HepG2 (cell line): ENCODE measurements at regions of chr16 and their contacts with region 1.

Region 1: DNA sequence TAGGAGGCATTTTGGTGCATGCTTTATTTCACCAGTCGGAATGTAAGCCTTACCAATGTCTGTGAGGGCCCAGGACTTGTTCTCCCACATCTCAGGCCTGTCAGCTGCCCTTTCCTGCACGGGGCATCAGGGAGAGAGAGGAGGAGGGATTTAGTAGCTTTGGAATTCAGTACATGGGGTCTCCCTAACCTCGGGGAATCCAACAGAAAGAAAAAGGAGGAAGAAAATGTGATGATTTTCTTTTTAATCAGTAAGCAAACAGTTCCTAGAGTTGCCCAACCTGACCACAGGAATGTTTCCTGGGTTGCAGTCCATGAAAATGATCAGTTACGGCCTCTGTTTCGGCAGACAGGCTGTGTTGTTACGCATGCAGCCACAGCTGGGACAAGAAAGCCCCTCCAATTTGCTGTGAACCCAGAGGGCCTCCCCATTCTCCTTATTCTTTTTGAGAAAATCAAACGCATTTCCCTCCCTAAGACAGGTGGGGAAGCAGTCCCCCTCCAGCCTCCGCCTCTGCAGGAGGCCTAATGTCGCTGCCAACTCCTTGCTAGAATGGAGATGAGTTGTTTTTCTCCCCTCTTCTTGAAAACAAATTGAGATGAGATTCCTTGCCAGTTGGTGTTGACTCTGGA is 53.1 kb upstream of the TANGO6 start:
- DNase-seq: peak; percentile 96
- ATAC-seq: peak; percentile 70
- H3K4me3 ChIP-seq: peak overlapping the region; percentile 11 to 58 (median 24); a peak in 5 of 6 replicates
- H3K27ac ChIP-seq: peak overlapping the region; percentile 74
- H3K4me1 ChIP-seq: peaks cover 86% of the 10 kb centered on the region
- H3K27me3 ChIP-seq: no peaks in the 10 kb centered on the region
- CTCF ChIP-seq: 0 out of 2 replicates have a peak, but pooled peaks have one; percentile 14
- EP300 ChIP-seq: peak; percentile 80 to 93; a peak in 3 of 4 replicates
- POLR2A ChIP-seq: peak in 1 of 2 experiments; percentile 69; a peak in 2 of 4 replicates
- RAD21 ChIP-seq: peak; percentile 23; the same call in 1 of the 2 replicates

Region 2: DNA sequence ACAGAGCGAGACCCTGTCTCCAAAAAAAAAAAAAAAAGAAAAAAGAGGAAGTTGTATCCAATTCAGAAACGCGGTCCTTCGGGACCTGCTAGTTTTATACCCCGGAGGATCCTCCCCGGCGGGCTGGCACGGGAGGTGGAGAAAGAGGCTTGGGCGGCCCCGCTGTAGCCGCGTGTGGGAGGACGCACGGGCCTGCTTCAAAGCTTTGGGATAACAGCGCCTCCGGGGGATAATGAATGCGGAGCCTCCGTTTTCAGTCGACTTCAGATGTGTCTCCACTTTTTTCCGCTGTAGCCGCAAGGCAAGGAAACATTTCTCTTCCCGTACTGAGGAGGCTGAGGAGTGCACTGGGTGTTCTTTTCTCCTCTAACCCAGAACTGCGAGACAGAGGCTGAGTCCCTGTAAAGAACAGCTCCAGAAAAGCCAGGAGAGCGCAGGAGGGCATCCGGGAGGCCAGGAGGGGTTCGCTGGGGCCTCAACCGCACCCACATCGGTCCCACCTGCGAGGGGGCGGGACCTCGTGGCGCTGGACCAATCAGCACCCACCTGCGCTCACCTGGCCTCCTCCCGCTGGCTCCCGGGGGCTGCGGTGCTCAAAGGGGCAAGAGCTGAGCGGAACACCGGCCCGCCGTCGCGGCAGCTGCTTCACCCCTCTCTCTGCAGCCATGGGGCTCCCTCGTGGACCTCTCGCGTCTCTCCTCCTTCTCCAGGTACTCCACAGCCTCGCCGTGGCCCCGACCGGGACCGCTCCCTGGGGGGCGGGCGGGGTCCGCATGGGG is 145.3 kb before region 1 on chr16 and contains the start of gene CDH3:
- CTCF ChIA-PET with region 1: no interaction called
- POLR2A ChIA-PET with region 1: no interaction called
- in situ Hi-C with region 1: no loop called
- intact Hi-C with region 1: no loop called
- DNase-seq: no peak
- ATAC-seq: peak; percentile 58
- H3K4me3 ChIP-seq: peak within 1 kb of the TSS in 2 of 3 experiments; percentile 5 to 53; a peak in 2 of 6 replicates
- H3K27ac ChIP-seq: no peak within 1 kb of the TSS
- H3K4me1 ChIP-seq: peaks cover 24% of the 10 kb centered on the region
- H3K27me3 ChIP-seq: peaks cover 15 to 65% of the 10 kb centered on the region in 2 experiments
- CTCF ChIP-seq: no peak
- EP300 ChIP-seq: no peak
- POLR2A ChIP-seq: no peak
- RAD21 ChIP-seq: no peak
- total RNA-seq, gene CDH3: not detected in 2 replicates

Region 3: GRCh38 chr16:68744369-68745280 is 45.6 kb before region 1 on chr16:
- CTCF ChIA-PET with region 1: no interaction called
- POLR2A ChIA-PET with region 1: interaction called, 134 read pairs
- in situ Hi-C with region 1: loop called (anchors 5 kb)
- intact Hi-C with region 1: loop called (anchors 2 kb)
- DNase-seq: peak; percentile 97
- ATAC-seq: peak; percentile 90
- H3K4me3 ChIP-seq: peak overlapping the region in 1 of 3 experiments; percentile 30; a peak in 2 of 6 replicates
- H3K27ac ChIP-seq: peak overlapping the region; percentile 83
- H3K4me1 ChIP-seq: peaks cover 87% of the 10 kb centered on the region
- H3K27me3 ChIP-seq: no peaks in the 10 kb centered on the region
- CTCF ChIP-seq: peak; percentile 40
- EP300 ChIP-seq: peak; percentile 80 to 95; a peak in 3 of 4 replicates
- POLR2A ChIP-seq: peak in 1 of 2 experiments; percentile 32; a peak in 1 of 4 replicates
- RAD21 ChIP-seq: peak; percentile 66

Region 4: GRCh38 chr16:69253870-69254341 is 463.7 kb after region 1 on chr16:
- CTCF ChIA-PET with region 1: no interaction called
- POLR2A ChIA-PET with region 1: no interaction called
- in situ Hi-C with region 1: no loop called
- intact Hi-C with region 1: no loop called
- DNase-seq: no peak
- ATAC-seq: no peak
- H3K4me3 ChIP-seq: no peak overlapping the region
- H3K27ac ChIP-seq: no peak overlapping the region
- H3K4me1 ChIP-seq: no peaks in the 10 kb centered on the region
- H3K27me3 ChIP-seq: no peaks in the 10 kb centered on the region
- CTCF ChIP-seq: no peak
- EP300 ChIP-seq: no peak
- POLR2A ChIP-seq: no peak
- RAD21 ChIP-seq: no peak

Region 5: DNA sequence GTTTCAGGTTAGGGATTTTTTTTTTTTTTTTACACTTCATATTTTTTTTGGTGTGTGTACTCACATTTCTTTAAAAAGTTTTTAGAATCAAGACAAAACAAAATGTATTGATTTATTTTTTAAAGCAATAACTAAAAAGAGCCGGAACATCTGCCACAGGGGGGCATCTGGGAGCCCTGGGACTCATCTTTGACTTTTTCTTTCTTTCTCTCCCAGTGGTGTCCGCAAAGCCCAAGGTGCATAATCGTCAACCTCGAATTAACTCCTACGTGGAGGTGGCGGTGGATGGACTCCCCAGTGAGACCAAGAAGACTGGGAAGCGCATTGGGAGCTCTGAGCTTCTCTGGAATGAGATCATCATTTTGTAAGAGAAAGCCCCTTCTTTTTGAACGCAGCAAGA is 1008.2 kb after region 1 on chr16:
- CTCF ChIA-PET with region 1: no interaction called
- POLR2A ChIA-PET with region 1: no interaction called
- in situ Hi-C with region 1: no loop called
- intact Hi-C with region 1: no loop called
- DNase-seq: no peak
- ATAC-seq: no peak
- H3K4me3 ChIP-seq: no peak overlapping the region
- H3K27ac ChIP-seq: no peak overlapping the region
- H3K4me1 ChIP-seq: no peaks in the 10 kb centered on the region; the same call in 1 of the 2 replicates
- H3K27me3 ChIP-seq: no peaks in the 10 kb centered on the region
- CTCF ChIP-seq: peak; percentile 43; the same call in 1 of the 2 replicates
- EP300 ChIP-seq: no peak
- POLR2A ChIP-seq: no peak
- RAD21 ChIP-seq: peak; percentile 32; the same call in 1 of the 2 replicates